ENCODE measurements at regions of chr12 and their contacts with region 1.

Region 1: GRCh38 chr12:92145731-92146496 is at the start of gene BTG1:
- DNase-seq: peak; percentile 90 to 100 (median 100)
- ATAC-seq: peak; percentile 84
- H3K4me3 ChIP-seq: peak within 1 kb of the TSS; percentile 98
- H3K4me3 Mint-ChIP-seq: peak within 1 kb of the TSS; percentile 94 to 100 (median 98)
- H3K27ac ChIP-seq: peak within 1 kb of the TSS; percentile 91
- H3K27ac Mint-ChIP-seq: peak within 1 kb of the TSS; percentile 98 to 100 (median 99)
- H3K4me1 ChIP-seq: peaks cover 7 to 14% of the 10 kb centered on the region in 2 donors
- H3K4me1 Mint-ChIP-seq: peaks cover 18 to 34% (median 27%) of the 10 kb centered on the region in 7 donors
- H3K27me3 ChIP-seq: no peaks in the 10 kb centered on the region
- H3K27me3 Mint-ChIP-seq: peaks cover 0 to 4% (median 0%) of the 10 kb centered on the region in 5 donors
- total RNA-seq, gene BTG1: 188 to 1,246 (median 571) TPM

Region 2: DNA sequence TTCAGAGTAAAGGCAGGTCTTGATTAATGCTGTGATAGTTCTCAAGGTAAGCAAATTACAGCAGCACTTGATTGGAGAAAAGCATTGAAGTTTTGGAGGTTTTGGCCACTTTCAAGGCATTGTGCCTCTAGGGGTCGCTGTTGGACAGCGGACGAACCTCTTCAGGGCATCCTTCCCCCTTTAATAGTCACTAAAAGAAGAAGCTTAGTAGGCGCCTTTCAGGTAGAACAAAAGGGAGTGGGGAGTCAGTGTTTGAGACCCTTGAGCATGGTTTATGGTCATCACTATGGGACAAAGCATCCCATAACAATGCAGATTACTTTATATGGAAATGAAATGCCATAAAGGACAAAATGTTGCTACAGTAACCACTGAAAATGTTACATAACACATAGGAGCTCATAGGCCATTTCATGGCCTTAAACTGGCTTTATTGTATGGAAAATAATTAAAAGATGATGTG is 763.8 kb before region 1 on chr12:
- CTCF ChIA-PET with region 1: interaction called, 9 read pairs
- POLR2A ChIA-PET with region 1: interaction called, 43 read pairs
- intact Hi-C with region 1: loop called (anchors 1 kb)
- DNase-seq: peak; percentile 67 to 89 (median 78)
- ATAC-seq: peak; percentile 94
- H3K4me3 ChIP-seq: peak overlapping the region; percentile 18
- H3K4me3 Mint-ChIP-seq: peak overlapping the region; percentile 69 to 91 (median 81)
- H3K27ac ChIP-seq: no peak overlapping the region
- H3K27ac Mint-ChIP-seq: peak overlapping the region in 8 of 9 donors; percentile 16 to 85 (median 49)
- H3K4me1 ChIP-seq: no peaks in the 10 kb centered on the region
- H3K4me1 Mint-ChIP-seq: peaks cover 0 to 11% (median 6%) of the 10 kb centered on the region in 7 donors
- H3K27me3 ChIP-seq: no peaks in the 10 kb centered on the region
- H3K27me3 Mint-ChIP-seq: peaks cover 0 to 13% (median 0%) of the 10 kb centered on the region in 5 donors

Region 3: GRCh38 chr12:91947459-91947858 is 198.5 kb before region 1 on chr12:
- CTCF ChIA-PET with region 1: no interaction called
- POLR2A ChIA-PET with region 1: no interaction called
- intact Hi-C with region 1: no loop called
- DNase-seq: peak in 1 of 9 donors; percentile 25
- ATAC-seq: peak; percentile 53
- H3K4me3 ChIP-seq: no peak overlapping the region
- H3K4me3 Mint-ChIP-seq: no peak overlapping the region
- H3K27ac ChIP-seq: no peak overlapping the region
- H3K27ac Mint-ChIP-seq: peak overlapping the region in 3 of 9 donors; percentile 26 to 66 (median 26)
- H3K4me1 ChIP-seq: peaks cover 3 to 4% of the 10 kb centered on the region in 2 donors
- H3K4me1 Mint-ChIP-seq: peaks cover 5 to 35% (median 14%) of the 10 kb centered on the region in 7 donors
- H3K27me3 ChIP-seq: no peaks in the 10 kb centered on the region
- H3K27me3 Mint-ChIP-seq: peaks cover 0 to 3% (median 0%) of the 10 kb centered on the region in 5 donors

Region 4: GRCh38 chr12:91991399-91992187 is 154.3 kb before region 1 on chr12:
- CTCF ChIA-PET with region 1: interaction called, 7 read pairs
- POLR2A ChIA-PET with region 1: interaction called, 225 read pairs
- intact Hi-C with region 1: loop called (anchors 1 kb)
- DNase-seq: peak in 5 of 9 donors; percentile 22 to 64 (median 48)
- ATAC-seq: peak; percentile 83
- H3K4me3 ChIP-seq: no peak overlapping the region
- H3K4me3 Mint-ChIP-seq: peak overlapping the region in 5 of 10 donors; percentile 18 to 50 (median 32)
- H3K27ac ChIP-seq: peak overlapping the region; percentile 26
- H3K27ac Mint-ChIP-seq: peak overlapping the region in 7 of 9 donors; percentile 8 to 92 (median 70)
- H3K4me1 ChIP-seq: peaks cover 9 to 27% of the 10 kb centered on the region in 2 donors
- H3K4me1 Mint-ChIP-seq: peaks cover 9 to 92% (median 79%) of the 10 kb centered on the region in 7 donors
- H3K27me3 ChIP-seq: no peaks in the 10 kb centered on the region
- H3K27me3 Mint-ChIP-seq: no peaks in the 10 kb centered on the region

Region 5: DNA sequence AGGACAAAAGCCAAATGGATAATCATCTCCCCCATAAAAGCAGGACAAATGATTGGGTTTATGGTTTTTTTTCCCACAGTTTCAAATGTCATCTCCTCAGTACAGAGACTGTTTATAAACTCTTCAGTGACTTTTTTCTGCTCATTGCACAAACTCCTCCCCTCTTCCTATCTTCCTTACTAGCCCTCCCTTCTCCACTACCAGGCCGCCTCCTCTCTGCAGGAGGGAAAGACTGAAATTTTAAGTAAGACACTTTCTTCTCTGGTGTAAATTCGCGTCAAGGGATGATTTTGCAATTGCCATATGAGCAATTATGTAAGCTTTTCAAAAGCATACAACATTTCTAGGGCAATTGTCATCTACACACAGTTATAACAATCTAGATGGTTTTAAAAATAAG is 37.3 kb before region 1 on chr12:
- CTCF ChIA-PET with region 1: interaction called, 6 read pairs
- POLR2A ChIA-PET with region 1: interaction called, 59 read pairs
- intact Hi-C with region 1: loop called in 1 of 2 experiments (anchors 5 kb)
- DNase-seq: no peak
- ATAC-seq: peak; percentile 24
- H3K4me3 ChIP-seq: peak overlapping the region; percentile 14
- H3K4me3 Mint-ChIP-seq: peak overlapping the region in 9 of 10 donors; percentile 20 to 91 (median 68)
- H3K27ac ChIP-seq: peak overlapping the region; percentile 51
- H3K27ac Mint-ChIP-seq: peak overlapping the region in 8 of 9 donors; percentile 73 to 92 (median 84)
- H3K4me1 ChIP-seq: peaks cover 10 to 73% of the 10 kb centered on the region in 2 donors
- H3K4me1 Mint-ChIP-seq: peaks cover 55 to 93% (median 83%) of the 10 kb centered on the region in 7 donors
- H3K27me3 ChIP-seq: no peaks in the 10 kb centered on the region
- H3K27me3 Mint-ChIP-seq: no peaks in the 10 kb centered on the region

Region 6: GRCh38 chr12:92244036-92244435 is 98.1 kb after region 1 on chr12:
- CTCF ChIA-PET with region 1: no interaction called
- POLR2A ChIA-PET with region 1: interaction called, 46 read pairs
- intact Hi-C with region 1: no loop called
- DNase-seq: no peak
- ATAC-seq: no peak
- H3K4me3 ChIP-seq: no peak overlapping the region
- H3K4me3 Mint-ChIP-seq: peak overlapping the region in 5 of 10 donors; percentile 5 to 71 (median 15)
- H3K27ac ChIP-seq: no peak overlapping the region
- H3K27ac Mint-ChIP-seq: peak overlapping the region in 7 of 9 donors; percentile 8 to 72 (median 44)
- H3K4me1 ChIP-seq: peaks cover 0 to 10% of the 10 kb centered on the region in 2 donors
- H3K4me1 Mint-ChIP-seq: peaks cover 2 to 32% (median 22%) of the 10 kb centered on the region in 7 donors
- H3K27me3 ChIP-seq: no peaks in the 10 kb centered on the region
- H3K27me3 Mint-ChIP-seq: no peaks in the 10 kb centered on the region

Region 7: DNA sequence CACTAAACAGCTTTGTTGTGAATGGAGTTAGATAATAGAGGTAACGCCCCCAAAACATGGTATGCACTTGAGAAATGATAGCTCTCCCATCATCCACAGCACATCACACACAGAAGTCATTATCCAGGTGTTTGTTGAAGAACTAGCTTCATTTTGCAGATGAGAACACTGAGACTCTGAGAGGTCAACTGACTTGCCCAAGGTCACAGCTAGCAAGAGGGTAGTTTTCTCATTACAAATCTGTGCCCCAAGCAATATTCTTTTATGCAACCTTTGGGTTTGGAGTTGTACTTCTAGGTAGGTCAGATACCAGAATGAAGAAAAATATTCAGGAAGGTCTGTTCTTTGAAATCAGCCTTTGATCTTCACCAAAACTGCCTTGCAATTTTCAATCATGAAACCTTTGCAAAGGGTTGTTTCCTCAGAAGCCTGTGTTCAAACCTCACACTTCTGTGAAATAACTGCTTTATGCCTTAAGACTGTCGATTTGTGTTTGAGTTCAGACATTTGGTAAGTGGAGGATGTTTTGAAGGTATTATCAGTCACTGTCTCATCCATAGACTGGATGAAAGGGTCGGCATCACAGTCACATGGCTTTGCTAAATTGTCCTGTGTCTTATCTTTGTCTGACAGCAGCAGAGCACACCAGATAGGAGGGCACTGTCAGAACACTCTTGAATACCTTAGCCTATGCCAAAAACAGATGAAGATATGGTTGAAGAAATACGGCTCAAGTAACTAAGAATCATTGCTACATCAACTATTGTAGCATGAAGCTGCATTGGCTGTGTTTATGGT is 233.0 kb after region 1 on chr12:
- CTCF ChIA-PET with region 1: interaction called, 3 read pairs
- POLR2A ChIA-PET with region 1: interaction called, 14 read pairs
- intact Hi-C with region 1: no loop called
- DNase-seq: peak in 7 of 9 donors; percentile 44 to 73 (median 65)
- ATAC-seq: peak; percentile 90
- H3K4me3 ChIP-seq: no peak overlapping the region
- H3K4me3 Mint-ChIP-seq: peak overlapping the region; percentile 8 to 74 (median 62)
- H3K27ac ChIP-seq: peak overlapping the region; percentile 64
- H3K27ac Mint-ChIP-seq: peak overlapping the region; percentile 87 to 96 (median 93)
- H3K4me1 ChIP-seq: peaks cover 8 to 52% of the 10 kb centered on the region in 2 donors
- H3K4me1 Mint-ChIP-seq: peaks cover 31 to 91% (median 87%) of the 10 kb centered on the region in 7 donors
- H3K27me3 ChIP-seq: no peaks in the 10 kb centered on the region
- H3K27me3 Mint-ChIP-seq: no peaks in the 10 kb centered on the region

Region 8: DNA sequence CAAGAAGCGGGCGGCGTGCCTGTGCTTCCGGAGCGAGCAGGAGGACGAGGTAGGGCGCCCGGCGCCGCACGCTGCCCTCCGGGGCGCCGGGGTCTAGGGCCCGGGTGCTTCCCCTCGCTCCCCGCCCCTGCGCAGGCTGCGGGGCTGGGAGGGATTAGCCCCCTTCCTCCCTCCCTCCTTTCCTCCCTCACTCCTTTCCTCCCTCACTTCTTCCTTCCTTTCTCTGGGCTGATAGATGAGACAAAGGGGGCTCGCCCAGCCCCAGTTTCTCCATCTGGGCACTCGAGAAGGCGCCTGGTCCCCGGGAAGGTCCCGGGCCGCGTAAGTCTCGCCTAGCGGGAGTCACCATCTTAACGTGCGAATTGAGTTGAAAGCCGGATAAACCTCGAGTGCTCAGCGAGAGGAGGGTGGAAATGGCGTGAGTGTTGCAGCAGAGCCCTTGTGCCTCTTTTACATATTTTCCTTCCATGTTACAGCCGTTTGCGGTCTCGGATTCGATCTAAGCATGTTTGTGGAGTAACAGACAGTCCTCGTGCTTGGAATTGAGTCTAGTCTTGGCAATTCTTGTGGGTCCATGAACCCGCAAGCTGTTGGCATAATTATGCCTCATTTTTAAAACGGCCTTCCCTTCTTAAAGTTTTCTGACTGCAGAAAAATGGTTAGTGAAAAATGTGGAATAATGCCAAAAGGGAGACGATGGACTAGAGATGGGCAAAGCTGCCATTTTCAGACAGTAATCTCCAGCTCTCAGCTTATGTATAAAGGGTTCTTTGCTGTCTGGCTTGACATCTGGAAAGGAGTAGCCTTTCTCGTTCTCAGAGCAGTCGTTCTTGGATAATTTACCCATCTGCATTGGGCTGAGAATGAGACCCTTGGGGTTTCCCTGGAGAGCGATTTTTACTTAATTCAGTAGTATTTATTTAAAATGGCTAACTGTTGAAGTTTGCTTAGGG is 1232.7 kb after region 1 on chr12:
- CTCF ChIA-PET with region 1: no interaction called
- POLR2A ChIA-PET with region 1: no interaction called
- intact Hi-C with region 1: loop called in 1 of 2 experiments (anchors 5 kb)
- DNase-seq: peak; percentile 47 to 73 (median 69)
- ATAC-seq: peak; percentile 60
- H3K4me3 ChIP-seq: peak overlapping the region; percentile 76
- H3K4me3 Mint-ChIP-seq: peak overlapping the region; percentile 98 to 100 (median 99)
- H3K27ac ChIP-seq: peak overlapping the region; percentile 94
- H3K27ac Mint-ChIP-seq: peak overlapping the region; percentile 94 to 100 (median 99)
- H3K4me1 ChIP-seq: peaks cover 19 to 22% of the 10 kb centered on the region in 2 donors
- H3K4me1 Mint-ChIP-seq: peaks cover 34 to 62% (median 51%) of the 10 kb centered on the region in 7 donors
- H3K27me3 ChIP-seq: no peaks in the 10 kb centered on the region
- H3K27me3 Mint-ChIP-seq: no peaks in the 10 kb centered on the region

Measured in naive thymus-derived CD4-positive, alpha-beta T cell (primary cell).